ENCODE measurements at regions of chr13 and their contacts with region 1.

Region 1: GRCh38 chr13:95378603-95379002 is 77.4 kb upstream of the ABCC4 start:
- DNase-seq: no peak
- ATAC-seq: no peak
- H3K4me3 ChIP-seq: no peak overlapping the region
- H3K4me3 Mint-ChIP-seq: no peak overlapping the region
- H3K27ac ChIP-seq: no peak overlapping the region
- H3K27ac Mint-ChIP-seq: no peak overlapping the region
- H3K4me1 ChIP-seq: peaks cover 6% of the 10 kb centered on the region
- H3K4me1 Mint-ChIP-seq: peaks cover 6% of the 10 kb centered on the region
- H3K27me3 ChIP-seq: no peaks in the 10 kb centered on the region
- H3K27me3 Mint-ChIP-seq: peaks cover 6% of the 10 kb centered on the region
- CTCF ChIP-seq: no peak

Region 2: GRCh38 chr13:95301183-95301967 is 77.2 kb before region 1 on chr13 and contains the start of gene ABCC4:
- CTCF ChIA-PET with region 1: interaction called, 4 read pairs
- POLR2A ChIA-PET with region 1: interaction called, 4 read pairs
- intact Hi-C with region 1: loop called in 1 of 2 experiments (anchors 1 kb)
- DNase-seq: peak; percentile 12 to 76 (median 43)
- ATAC-seq: peak; percentile 79
- H3K4me3 ChIP-seq: peak within 1 kb of the TSS; percentile 79
- H3K4me3 Mint-ChIP-seq: peak within 1 kb of the TSS; percentile 90
- H3K27ac ChIP-seq: no peak within 1 kb of the TSS
- H3K27ac Mint-ChIP-seq: peak within 1 kb of the TSS; percentile 21
- H3K4me1 ChIP-seq: peaks cover 21% of the 10 kb centered on the region
- H3K4me1 Mint-ChIP-seq: peaks cover 25% of the 10 kb centered on the region
- H3K27me3 ChIP-seq: no peaks in the 10 kb centered on the region
- H3K27me3 Mint-ChIP-seq: no peaks in the 10 kb centered on the region
- CTCF ChIP-seq: no peak
- total RNA-seq, gene ABCC4: 4.0 to 4.4 TPM